Pancreas (tissue), 10 donors: ENCODE measurements at regions of chr10 and their contacts with region 1.

Region 1: DNA sequence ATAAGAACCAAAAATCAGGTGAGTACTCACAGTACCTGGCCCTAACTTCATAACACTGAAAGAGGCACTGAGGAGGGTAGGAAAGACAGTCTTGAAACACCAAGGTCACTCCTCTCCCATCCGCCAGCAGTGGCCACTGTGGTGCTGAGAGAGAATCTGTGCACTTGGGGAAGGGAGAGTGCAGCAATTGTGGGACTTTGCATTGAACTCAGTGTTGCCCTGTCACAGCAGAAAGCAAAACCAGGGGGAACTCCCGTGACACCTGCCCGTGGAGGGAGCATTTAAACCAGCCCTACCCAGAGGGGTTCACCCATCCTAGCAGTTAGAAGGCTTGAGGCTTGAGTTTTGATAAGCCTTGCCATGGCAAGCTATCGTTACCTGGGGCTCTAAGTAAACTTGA is 35.2 kb upstream of the MAP3K8 start:
- DNase-seq: no peak
- ATAC-seq: no peak
- H3K4me3 ChIP-seq: no peak overlapping the region
- H3K27ac ChIP-seq: no peak overlapping the region
- H3K4me1 ChIP-seq: no peaks in the 10 kb centered on the region
- H3K27me3 ChIP-seq: no peaks in the 10 kb centered on the region
- CTCF ChIP-seq: no peak

Region 2: DNA sequence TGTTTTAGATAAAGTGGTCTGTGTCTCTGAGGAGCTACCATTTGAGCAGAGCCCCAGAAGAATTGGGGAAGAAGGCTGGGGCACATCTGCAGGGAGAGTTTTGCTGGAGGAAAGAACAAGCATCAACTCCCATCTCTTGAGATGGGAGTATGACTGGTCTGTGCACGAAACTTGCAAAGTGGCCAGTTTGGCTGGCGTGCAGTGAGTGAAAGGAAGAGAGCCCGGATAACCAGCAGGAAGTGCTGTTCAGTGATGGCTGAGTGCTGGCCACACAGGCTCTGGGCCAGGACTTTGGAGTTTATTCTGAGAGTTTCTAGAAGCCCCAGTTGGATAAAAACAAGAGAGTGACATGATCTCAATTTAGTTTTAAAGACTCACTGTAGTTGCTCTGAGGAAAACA is 729.6 kb before region 1 on chr10:
- intact Hi-C with region 1: no loop called
- DNase-seq: no peak
- ATAC-seq: peak in 1 of 4 donors; percentile 23
- H3K4me3 ChIP-seq: no peak overlapping the region
- H3K27ac ChIP-seq: no peak overlapping the region
- H3K4me1 ChIP-seq: no peaks in the 10 kb centered on the region
- H3K27me3 ChIP-seq: no peaks in the 10 kb centered on the region
- CTCF ChIP-seq: no peak

Region 3: DNA sequence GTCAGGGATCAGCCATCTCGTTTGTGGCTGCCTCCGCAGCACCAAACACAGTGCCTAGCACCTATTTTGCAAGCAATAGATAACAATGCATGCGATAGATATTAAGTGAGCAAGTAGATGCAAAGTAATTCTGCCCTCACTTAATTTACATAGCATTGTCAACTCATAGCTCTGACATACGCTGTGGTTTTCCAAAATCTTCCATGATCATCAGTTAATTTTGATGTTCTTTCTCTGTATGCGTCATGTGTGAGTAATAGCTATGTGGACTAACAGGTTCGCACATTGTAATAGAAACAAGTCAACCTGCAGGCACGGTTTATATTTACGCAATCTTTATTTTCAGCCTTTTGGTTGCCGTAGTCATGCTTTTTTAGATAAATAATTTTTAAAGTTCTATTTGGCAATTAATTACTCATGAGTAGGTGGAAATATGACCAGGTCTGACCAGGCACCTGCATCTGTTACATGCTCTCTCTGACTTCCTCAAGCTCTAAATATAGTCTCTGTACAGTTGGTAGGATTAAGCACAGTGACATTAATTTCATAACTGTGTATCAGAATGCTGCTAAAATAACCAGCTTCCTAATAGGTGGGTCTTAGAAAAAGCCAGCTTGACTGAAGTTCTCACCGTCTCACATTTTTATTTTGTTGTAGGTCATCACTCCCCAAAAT is 48.5 kb after region 1 on chr10:
- intact Hi-C with region 1: no loop called
- DNase-seq: no peak
- ATAC-seq: peak in 1 of 4 donors; percentile 34
- H3K4me3 ChIP-seq: no peak overlapping the region
- H3K27ac ChIP-seq: no peak overlapping the region
- H3K4me1 ChIP-seq: no peaks in the 10 kb centered on the region
- H3K27me3 ChIP-seq: no peaks in the 10 kb centered on the region
- CTCF ChIP-seq: no peak

Region 4: GRCh38 chr10:30472414-30473155 is 73.8 kb after region 1 on chr10:
- intact Hi-C with region 1: no loop called
- DNase-seq: no peak
- ATAC-seq: no peak
- H3K4me3 ChIP-seq: no peak overlapping the region
- H3K27ac ChIP-seq: no peak overlapping the region
- H3K4me1 ChIP-seq: no peaks in the 10 kb centered on the region
- H3K27me3 ChIP-seq: no peaks in the 10 kb centered on the region
- CTCF ChIP-seq: no peak

Region 5: DNA sequence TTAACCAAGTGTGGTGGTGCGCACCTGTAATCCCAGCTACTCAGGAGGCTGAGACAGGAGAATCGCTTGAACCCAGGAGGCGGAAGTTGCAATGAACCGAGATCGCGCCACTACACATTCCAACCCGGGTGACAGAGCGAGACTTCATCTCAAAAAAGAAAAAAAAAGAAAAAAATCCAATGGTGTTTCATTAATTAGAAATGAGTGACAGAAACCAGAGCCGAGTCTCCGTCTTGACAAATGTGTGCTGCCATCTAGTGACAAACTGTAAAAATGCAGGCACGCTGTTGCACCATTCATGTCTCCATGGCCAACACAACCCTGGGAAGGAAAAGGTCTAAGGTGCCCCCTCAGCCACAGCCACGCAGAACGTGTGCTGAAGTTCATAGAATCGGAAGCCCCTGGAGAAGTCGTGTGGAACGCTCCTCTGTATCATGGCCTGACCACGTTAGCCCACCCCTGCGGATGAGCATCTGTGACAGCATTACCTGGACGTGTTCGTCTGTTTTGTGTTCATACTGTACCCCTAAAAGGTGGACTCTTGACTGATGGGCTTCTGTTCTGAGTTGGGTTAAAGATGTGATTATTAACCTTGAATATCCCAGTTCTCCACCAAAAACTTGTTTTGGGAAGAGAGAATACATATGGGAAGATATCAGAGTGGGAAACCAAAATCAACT is 135.8 kb after region 1 on chr10:
- intact Hi-C with region 1: loop called in 1 of 3 experiments (anchors 5 kb)
- DNase-seq: peak in 5 of 6 donors; percentile 44 to 77 (median 47)
- ATAC-seq: peak; percentile 69 to 89 (median 87)
- H3K4me3 ChIP-seq: no peak overlapping the region
- H3K27ac ChIP-seq: no peak overlapping the region
- H3K4me1 ChIP-seq: peaks cover 0 to 3% (median 0%) of the 10 kb centered on the region in 3 donors
- H3K27me3 ChIP-seq: no peaks in the 10 kb centered on the region
- CTCF ChIP-seq: peak; percentile 83 to 92 (median 88)

Region 6: DNA sequence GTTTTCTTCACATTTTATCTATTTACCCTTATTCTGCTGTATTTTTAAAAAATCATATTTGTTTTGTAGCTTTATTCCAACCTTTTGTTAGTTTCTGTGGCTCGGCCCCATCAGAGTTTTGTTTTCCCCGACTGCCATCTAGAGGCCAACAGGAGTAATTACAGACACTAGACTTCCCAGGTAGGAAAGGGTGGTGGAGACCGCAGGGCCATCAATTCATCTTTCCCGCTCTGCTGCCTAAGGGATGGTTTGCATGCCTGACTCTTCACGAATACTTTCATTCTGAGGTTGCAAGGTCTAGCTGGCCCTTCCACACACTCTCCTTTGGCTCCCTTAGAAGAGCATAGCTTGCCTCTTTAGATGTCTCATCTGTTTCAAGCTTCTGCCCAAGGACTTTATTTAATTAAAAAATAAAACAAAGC is 192.5 kb after region 1 on chr10:
- intact Hi-C with region 1: loop called in 1 of 3 experiments (anchors 5 kb)
- DNase-seq: peak in 1 of 6 donors; percentile 31
- ATAC-seq: peak; percentile 76 to 83 (median 76)
- H3K4me3 ChIP-seq: no peak overlapping the region
- H3K27ac ChIP-seq: no peak overlapping the region
- H3K4me1 ChIP-seq: peaks cover 0 to 5% (median 0%) of the 10 kb centered on the region in 3 donors
- H3K27me3 ChIP-seq: no peaks in the 10 kb centered on the region
- CTCF ChIP-seq: peak; percentile 47 to 60 (median 58)

Region 7: DNA sequence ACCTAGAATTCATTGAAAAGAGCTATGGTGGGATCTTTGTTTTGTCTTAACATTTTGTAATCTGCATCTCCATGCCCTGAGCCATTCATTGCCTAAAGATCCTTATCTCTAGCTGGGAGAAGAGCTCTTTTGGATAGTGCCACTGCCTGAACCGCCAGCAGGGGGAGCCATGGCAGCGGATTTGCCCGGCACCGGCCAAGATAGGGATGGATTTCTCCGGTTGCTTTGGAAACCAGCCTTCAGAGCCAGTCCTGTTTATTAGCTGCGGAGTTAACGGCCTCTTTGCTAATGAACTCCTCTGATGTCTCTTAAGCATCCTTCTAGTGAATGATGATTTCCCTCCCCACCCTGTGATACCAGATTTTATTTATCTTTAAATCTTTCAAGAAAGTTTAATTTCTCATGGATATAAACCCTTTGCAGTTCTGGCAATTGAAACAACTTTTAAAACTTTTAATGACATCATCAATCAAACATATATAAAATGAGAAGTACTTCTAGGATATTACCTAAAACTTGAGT is 289.0 kb after region 1 on chr10:
- intact Hi-C with region 1: no loop called
- DNase-seq: peak in 5 of 6 donors; percentile 29 to 87 (median 63)
- ATAC-seq: peak in 3 of 4 donors; percentile 85 to 89 (median 86)
- H3K4me3 ChIP-seq: no peak overlapping the region
- H3K27ac ChIP-seq: no peak overlapping the region
- H3K4me1 ChIP-seq: no peaks in the 10 kb centered on the region
- H3K27me3 ChIP-seq: no peaks in the 10 kb centered on the region
- CTCF ChIP-seq: peak; percentile 47 to 86 (median 73)